CD8-positive, alpha-beta memory T cell (primary cell): ENCODE measurements at regions of chr20 and their contacts with region 1.

Region 1: DNA sequence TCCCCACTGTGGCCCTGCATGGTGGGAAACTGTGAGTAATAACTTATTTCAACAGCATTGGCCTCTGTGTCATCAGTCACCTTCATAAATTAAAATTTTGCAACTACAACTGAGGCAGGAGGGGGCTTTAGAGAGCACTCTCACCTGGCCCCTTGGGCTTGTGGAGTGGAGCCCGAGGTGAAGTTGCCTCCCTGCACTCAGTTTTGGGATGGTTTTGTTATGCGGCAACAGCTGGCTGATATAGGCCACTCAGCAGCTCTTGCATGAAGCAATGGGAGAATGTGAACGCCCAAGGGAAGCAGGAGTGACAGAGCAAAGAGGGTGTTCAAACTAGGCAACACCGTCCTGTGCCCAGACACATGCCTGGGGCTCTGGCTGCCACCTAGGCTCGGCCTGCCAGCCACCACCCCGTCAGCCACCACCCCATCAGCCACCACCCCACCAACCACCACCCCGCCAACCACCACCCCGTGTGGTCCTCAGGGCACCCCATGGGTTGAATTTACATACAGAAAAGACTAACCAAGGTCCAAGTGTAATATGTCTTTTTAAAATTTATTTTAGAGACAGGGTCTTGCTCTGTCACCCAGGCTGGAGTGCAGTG is 4.3 kb upstream of the GFRA4 start:
- DNase-seq: no peak
- H3K4me3 ChIP-seq: no peak overlapping the region
- H3K4me3 Mint-ChIP-seq: peak overlapping the region in 4 of 7 donors; percentile 46 to 87 (median 74)
- H3K27ac ChIP-seq: no peak overlapping the region
- H3K27ac Mint-ChIP-seq: peak overlapping the region in 5 of 8 donors; percentile 7 to 86 (median 33)
- H3K4me1 ChIP-seq: peaks cover 16% of the 10 kb centered on the region
- H3K4me1 Mint-ChIP-seq: peaks cover 31 to 41% (median 35%) of the 10 kb centered on the region in 3 donors
- H3K27me3 ChIP-seq: peaks cover 19% of the 10 kb centered on the region
- H3K27me3 Mint-ChIP-seq: peaks cover 46 to 49% of the 10 kb centered on the region in 2 donors

Region 2: DNA sequence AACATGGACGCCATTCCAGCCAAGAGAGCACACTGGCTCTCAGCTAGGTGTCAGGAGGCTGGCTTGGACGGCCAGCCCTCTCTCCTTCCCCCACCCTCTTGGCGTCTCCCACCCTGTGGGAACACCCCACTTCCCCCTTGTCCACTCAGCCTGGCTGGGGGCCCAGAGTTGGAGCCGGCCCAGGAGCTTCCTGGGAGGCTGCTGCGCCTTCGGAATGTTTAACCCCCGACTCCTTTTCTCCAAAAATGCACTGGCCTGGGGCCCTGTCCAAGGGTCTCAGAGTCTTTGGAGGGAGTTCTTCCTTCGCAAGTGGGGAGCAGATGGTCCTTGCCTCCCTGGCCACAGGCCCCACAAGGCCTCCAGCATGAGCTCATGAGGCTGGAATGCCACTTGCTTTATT is 10.2 kb after region 1 on chr20:
- CTCF ChIA-PET with region 1: interaction called, 10 read pairs
- POLR2A ChIA-PET with region 1: no interaction called
- DNase-seq: no peak
- H3K4me3 ChIP-seq: no peak overlapping the region
- H3K4me3 Mint-ChIP-seq: no peak overlapping the region
- H3K27ac ChIP-seq: no peak overlapping the region
- H3K27ac Mint-ChIP-seq: no peak overlapping the region
- H3K4me1 ChIP-seq: no peaks in the 10 kb centered on the region
- H3K4me1 Mint-ChIP-seq: peaks cover 0 to 20% (median 8%) of the 10 kb centered on the region in 3 donors
- H3K27me3 ChIP-seq: peaks cover 11% of the 10 kb centered on the region
- H3K27me3 Mint-ChIP-seq: peaks cover 46 to 61% of the 10 kb centered on the region in 2 donors